ENCODE measurements at regions of chr13 and their contacts with region 1.

Region 1: GRCh38 chr13:87671031-87671752 is at the start of gene SLITRK5:
- DNase-seq: peak; percentile 93
- H3K4me3 ChIP-seq: peak within 1 kb of the TSS; percentile 79
- H3K27ac ChIP-seq: peak within 1 kb of the TSS; percentile 91
- H3K4me1 ChIP-seq: peaks cover 26% of the 10 kb centered on the region
- CTCF ChIP-seq: peak; percentile 97
- total RNA-seq, gene SLITRK5: 9.8 and 10.6 TPM in 2 replicates

Region 2: GRCh38 chr13:86870444-86870843 is 800.7 kb before region 1 on chr13:
- CTCF ChIA-PET with region 1: no interaction called
- POLR2A ChIA-PET with region 1: no interaction called
- intact Hi-C with region 1: loop called (anchors 2 kb)
- DNase-seq: peak; percentile 37
- H3K4me3 ChIP-seq: no peak overlapping the region
- H3K27ac ChIP-seq: no peak overlapping the region
- H3K4me1 ChIP-seq: no peaks in the 10 kb centered on the region
- CTCF ChIP-seq: peak; percentile 97

Region 3: GRCh38 chr13:87052731-87053130 is 618.5 kb before region 1 on chr13:
- CTCF ChIA-PET with region 1: no interaction called
- POLR2A ChIA-PET with region 1: no interaction called
- intact Hi-C with region 1: no loop called
- DNase-seq: no peak
- H3K4me3 ChIP-seq: no peak overlapping the region
- H3K27ac ChIP-seq: no peak overlapping the region
- H3K4me1 ChIP-seq: no peaks in the 10 kb centered on the region
- CTCF ChIP-seq: no peak

Region 4: GRCh38 chr13:87259551-87259954 is 411.6 kb before region 1 on chr13:
- CTCF ChIA-PET with region 1: no interaction called
- POLR2A ChIA-PET with region 1: interaction called, 8 read pairs
- intact Hi-C with region 1: loop called (anchors 1 kb)
- DNase-seq: peak; percentile 46
- H3K4me3 ChIP-seq: no peak overlapping the region
- H3K27ac ChIP-seq: no peak overlapping the region
- H3K4me1 ChIP-seq: no peaks in the 10 kb centered on the region
- CTCF ChIP-seq: peak; percentile 68

Region 5: DNA sequence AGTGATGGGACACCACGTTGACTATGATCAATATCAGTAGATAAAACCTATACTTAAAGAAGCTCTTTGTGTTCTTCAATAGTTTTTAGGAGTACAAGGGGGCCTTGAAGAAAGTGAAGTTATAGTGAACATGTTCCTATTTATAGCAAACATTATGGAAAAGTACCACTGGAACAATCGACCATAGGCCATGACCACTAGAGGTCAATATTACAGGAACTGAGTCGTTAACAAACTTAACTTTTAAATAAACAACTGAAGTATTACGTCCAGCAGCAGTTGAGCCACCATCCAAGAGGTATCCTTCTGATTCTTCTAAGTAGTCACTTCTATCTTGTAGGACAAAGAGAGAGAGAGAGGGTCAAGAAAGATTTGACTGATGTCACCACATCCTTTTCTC is 391.1 kb before region 1 on chr13:
- CTCF ChIA-PET with region 1: no interaction called
- POLR2A ChIA-PET with region 1: no interaction called
- intact Hi-C with region 1: loop called (anchors 2 kb)
- DNase-seq: no peak
- H3K4me3 ChIP-seq: no peak overlapping the region
- H3K27ac ChIP-seq: no peak overlapping the region
- H3K4me1 ChIP-seq: peaks cover 15% of the 10 kb centered on the region
- CTCF ChIP-seq: peak; percentile 64

Region 6: DNA sequence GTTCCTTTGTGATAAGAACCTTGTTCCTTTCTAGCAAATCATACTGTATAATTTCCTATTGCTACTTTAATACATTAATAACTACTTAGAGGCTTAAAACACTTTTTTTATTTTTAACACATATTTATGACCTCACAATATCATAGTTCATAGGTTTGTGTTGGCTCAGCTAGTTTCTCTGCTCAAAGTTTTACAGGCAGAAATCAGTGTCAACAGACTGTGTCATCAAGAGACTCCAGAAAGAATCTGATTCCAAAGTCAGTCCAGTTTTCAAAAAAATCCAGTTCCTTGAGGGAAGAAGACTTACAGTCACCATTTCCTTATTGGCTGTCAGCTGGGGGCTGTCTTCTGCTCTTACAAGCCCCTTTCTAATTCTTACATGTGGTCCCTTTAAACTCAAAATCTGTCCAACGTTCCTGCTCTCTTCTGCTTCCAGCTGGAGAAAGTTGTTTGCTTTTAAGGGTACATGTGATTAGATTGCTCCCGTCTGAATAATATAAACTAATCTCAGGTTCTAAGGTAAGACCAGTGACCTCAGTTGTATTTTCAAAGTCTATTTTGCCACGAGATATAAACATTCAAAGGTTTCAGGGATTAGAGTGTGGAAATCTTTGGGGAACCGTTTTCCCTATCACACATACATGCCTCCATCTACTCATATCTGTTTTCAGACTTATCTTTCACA is 267.3 kb before region 1 on chr13:
- CTCF ChIA-PET with region 1: no interaction called
- POLR2A ChIA-PET with region 1: no interaction called
- intact Hi-C with region 1: loop called (anchors 5 kb)
- DNase-seq: no peak
- H3K4me3 ChIP-seq: no peak overlapping the region
- H3K27ac ChIP-seq: no peak overlapping the region
- H3K4me1 ChIP-seq: no peaks in the 10 kb centered on the region
- CTCF ChIP-seq: no peak

Region 7: DNA sequence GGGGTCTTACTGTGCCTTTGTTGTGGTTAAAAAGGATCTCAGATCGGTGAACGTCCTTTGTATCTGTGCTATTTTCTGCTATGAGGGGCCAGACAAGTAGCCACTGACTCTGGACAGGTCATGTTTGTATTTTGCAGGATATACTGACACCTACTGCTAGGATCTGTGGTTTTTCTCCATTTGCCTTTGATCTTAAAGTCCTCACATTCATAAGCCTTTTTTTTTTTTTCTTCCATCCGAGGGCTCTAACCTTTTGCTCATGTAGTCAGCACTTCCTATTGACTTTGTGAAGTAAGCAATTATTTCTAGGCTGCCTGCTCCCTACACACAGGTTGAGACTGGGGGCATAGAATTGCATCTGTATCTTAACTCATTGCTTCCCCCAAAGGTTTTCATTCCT is 106.2 kb after region 1 on chr13:
- CTCF ChIA-PET with region 1: no interaction called
- POLR2A ChIA-PET with region 1: no interaction called
- intact Hi-C with region 1: loop called (anchors 5 kb)
- DNase-seq: peak; percentile 50
- H3K4me3 ChIP-seq: peak overlapping the region; percentile 32
- H3K27ac ChIP-seq: no peak overlapping the region
- H3K4me1 ChIP-seq: peaks cover 8% of the 10 kb centered on the region
- CTCF ChIP-seq: peak; percentile 72